ENCODE measurements at regions of chr6 and their contacts with region 1.

Region 1: DNA sequence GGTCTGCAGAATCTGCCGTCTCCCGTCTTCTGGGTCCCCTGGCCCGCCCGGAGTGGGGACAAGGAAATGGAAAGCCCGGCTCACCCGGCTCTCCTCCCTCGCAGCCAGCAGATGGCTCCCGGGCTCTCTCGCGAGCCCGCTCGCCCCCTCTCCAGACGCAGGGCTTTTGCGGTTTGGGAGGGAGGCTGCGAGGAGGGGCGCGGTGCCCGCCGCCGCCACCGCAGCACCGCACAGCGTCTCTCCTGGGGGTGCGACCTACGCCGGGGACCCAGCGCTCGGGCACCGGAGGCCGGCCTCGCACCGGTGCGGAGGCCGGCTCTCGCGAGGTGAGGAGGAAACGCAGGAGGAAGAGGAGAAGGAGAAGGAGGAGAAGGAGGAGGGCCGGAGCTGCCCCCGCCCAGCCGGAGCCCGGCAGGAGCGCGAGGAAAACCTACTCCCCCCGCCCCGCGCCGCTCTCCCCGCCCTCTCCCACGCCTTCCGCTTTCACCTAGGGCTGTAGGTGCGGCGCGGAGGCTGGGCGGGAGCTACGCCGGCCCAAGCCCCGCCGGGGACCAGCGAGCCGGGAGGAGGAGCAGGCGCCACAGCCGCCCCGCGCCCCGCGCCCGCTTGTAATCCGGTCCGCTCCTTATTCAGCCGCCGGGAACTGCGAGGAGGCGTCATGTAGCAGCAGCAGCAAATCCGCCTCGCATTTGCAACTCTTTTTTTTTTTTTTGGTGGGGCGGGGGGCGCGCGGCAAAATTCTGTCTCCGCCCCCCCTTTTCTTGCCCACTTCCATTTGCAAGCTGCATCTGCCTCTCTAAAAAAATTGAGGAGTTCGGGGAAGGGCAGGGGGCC is at the start of gene CARMIL1:
- DNase-seq: peak; percentile 90
- ATAC-seq: peak; percentile 76
- H3K4me3 ChIP-seq: peak within 1 kb of the TSS; percentile 84
- H3K27ac ChIP-seq: peak within 1 kb of the TSS; percentile 67
- H3K4me1 ChIP-seq: peaks cover 34% of the 10 kb centered on the region
- H3K27me3 ChIP-seq: no peaks in the 10 kb centered on the region
- CTCF ChIP-seq: peak; percentile 82
- total RNA-seq, gene CARMIL1: 17.0 and 22.0 TPM in 2 replicates

Region 2: DNA sequence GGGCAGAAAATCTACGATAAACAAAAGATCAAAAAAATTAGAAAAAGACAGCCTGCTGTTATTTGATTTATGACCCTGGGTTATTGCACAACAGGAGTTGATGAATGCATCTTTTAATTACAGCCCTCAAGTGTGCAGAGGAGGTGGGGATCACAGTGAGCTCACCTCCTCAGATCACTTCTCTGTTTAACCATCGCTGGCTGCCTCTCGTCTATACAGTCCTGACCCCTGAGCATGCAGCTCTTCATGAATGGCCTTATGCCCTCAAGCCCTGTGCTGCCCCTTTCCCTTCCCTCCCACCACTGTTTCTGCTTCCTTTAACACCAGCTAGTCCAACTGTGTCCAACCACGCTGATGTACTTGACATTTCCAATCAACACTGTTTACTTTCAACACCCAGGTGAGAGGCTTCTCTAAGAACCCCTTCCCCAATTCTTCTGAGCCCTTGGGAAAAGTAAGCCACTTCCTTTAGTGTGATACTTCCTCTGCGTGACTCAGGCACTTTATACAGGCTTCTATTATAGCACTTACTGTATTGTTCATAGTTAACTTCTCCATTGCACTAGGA is 282.8 kb before region 1 on chr6:
- CTCF ChIA-PET with region 1: no interaction called
- POLR2A ChIA-PET with region 1: no interaction called
- intact Hi-C with region 1: no loop called
- DNase-seq: no peak
- ATAC-seq: no peak
- H3K4me3 ChIP-seq: no peak overlapping the region
- H3K27ac ChIP-seq: no peak overlapping the region
- H3K4me1 ChIP-seq: no peaks in the 10 kb centered on the region; the same call in 1 of the 2 replicates
- H3K27me3 ChIP-seq: no peaks in the 10 kb centered on the region
- CTCF ChIP-seq: no peak

Region 3: GRCh38 chr6:25312703-25313501 is 33.8 kb after region 1 on chr6:
- CTCF ChIA-PET with region 1: interaction called, 10 read pairs
- POLR2A ChIA-PET with region 1: interaction called, 35 read pairs
- intact Hi-C with region 1: loop called (anchors 1 kb)
- DNase-seq: peak; percentile 82
- ATAC-seq: peak; percentile 75
- H3K4me3 ChIP-seq: peak overlapping the region; percentile 61
- H3K27ac ChIP-seq: peak overlapping the region; percentile 85
- H3K4me1 ChIP-seq: peaks cover 38% of the 10 kb centered on the region
- H3K27me3 ChIP-seq: no peaks in the 10 kb centered on the region
- CTCF ChIP-seq: no peak; the same call in 1 of the 2 replicates

Region 4: DNA sequence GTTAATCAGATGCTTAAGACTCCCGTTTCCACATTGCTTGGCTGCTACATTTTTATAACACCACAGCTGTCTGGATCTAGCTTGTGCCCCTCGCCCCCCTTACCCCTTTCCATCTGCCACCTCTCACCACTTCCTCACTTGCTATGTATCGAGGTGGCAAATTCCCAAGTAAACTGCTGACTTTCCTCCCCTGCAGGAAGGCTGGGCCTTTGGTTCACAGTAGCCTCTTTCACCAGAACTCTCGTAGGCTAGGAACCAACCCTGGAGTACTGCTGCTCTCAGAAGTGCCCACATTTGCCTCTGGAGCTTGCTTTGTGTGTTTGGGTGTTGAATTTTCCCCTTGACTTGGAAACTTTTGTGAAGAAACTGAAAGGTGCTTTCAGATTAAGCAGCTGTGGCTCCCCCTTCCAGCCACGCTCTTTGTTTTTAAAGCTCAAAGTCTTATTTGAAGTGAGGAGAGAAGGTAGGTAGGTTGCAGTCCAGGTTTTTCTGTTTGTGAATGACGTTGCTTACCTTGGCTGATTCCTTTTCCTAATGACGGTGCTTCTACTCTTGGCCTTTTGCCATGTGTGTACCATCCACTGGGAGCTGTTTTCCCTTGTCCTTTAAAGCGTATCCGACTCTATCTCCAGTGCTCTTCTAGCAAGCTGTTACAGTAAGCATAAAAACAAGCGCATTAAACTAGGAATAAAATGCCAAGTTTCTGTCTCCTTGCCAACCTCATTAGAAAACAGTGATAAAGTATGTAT is 90.5 kb after region 1 on chr6:
- CTCF ChIA-PET with region 1: interaction called, 3 read pairs
- POLR2A ChIA-PET with region 1: no interaction called
- intact Hi-C with region 1: loop called (anchors 10 kb)
- DNase-seq: no peak
- ATAC-seq: no peak
- H3K4me3 ChIP-seq: no peak overlapping the region
- H3K27ac ChIP-seq: no peak overlapping the region
- H3K4me1 ChIP-seq: peaks cover 11% of the 10 kb centered on the region
- H3K27me3 ChIP-seq: no peaks in the 10 kb centered on the region
- CTCF ChIP-seq: no peak

Region 5: DNA sequence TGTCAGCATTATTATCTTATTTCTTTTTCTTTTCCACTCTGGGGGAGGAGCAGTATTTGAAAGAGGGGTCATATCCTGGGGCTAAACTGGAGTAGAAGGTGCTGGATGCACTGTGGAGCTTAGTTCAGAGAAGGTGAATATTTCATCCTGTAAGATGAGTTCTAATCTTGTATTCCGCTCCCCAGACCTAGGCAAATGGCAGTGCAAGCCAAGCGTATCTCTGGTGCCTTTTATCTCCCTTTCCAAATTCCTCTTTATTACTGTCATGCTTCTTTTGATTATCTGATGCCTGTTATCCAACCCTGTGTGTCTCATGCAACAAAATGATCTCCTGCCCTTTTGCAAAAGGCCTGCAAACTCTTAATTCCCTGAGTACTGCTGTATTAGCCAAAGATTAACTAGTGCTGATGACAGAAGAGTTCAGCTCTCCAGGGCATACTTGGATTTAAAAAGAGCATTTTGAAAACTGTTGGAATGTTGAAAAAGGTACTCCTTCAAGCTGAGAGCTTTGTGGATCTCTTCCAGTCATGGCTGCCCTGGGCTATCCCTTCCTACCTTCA is 138.0 kb after region 1 on chr6:
- CTCF ChIA-PET with region 1: interaction called, 9 read pairs
- POLR2A ChIA-PET with region 1: interaction called, 18 read pairs
- intact Hi-C with region 1: no loop called
- DNase-seq: no peak
- ATAC-seq: no peak
- H3K4me3 ChIP-seq: no peak overlapping the region
- H3K27ac ChIP-seq: no peak overlapping the region
- H3K4me1 ChIP-seq: peaks cover 22% of the 10 kb centered on the region
- H3K27me3 ChIP-seq: no peaks in the 10 kb centered on the region
- CTCF ChIP-seq: no peak

Region 6: GRCh38 chr6:25490018-25490801 is 211.1 kb after region 1 on chr6:
- CTCF ChIA-PET with region 1: interaction called, 35 read pairs
- POLR2A ChIA-PET with region 1: no interaction called
- intact Hi-C with region 1: loop called (anchors 1 kb)
- DNase-seq: peak; percentile 92
- ATAC-seq: peak; percentile 97
- H3K4me3 ChIP-seq: no peak overlapping the region
- H3K27ac ChIP-seq: no peak overlapping the region
- H3K4me1 ChIP-seq: peaks cover 4% of the 10 kb centered on the region; the same call in 1 of the 2 replicates
- H3K27me3 ChIP-seq: no peaks in the 10 kb centered on the region
- CTCF ChIP-seq: peak; percentile 90

Region 7: GRCh38 chr6:25511376-25511775 is 232.2 kb after region 1 on chr6:
- CTCF ChIA-PET with region 1: interaction called, 13 read pairs
- POLR2A ChIA-PET with region 1: no interaction called
- intact Hi-C with region 1: no loop called
- DNase-seq: peak; percentile 54
- ATAC-seq: peak; percentile 48; the same call in 1 of the 2 replicates
- H3K4me3 ChIP-seq: no peak overlapping the region
- H3K27ac ChIP-seq: peak overlapping the region; percentile 35
- H3K4me1 ChIP-seq: peaks cover 23% of the 10 kb centered on the region
- H3K27me3 ChIP-seq: no peaks in the 10 kb centered on the region
- CTCF ChIP-seq: no peak

Region 8: DNA sequence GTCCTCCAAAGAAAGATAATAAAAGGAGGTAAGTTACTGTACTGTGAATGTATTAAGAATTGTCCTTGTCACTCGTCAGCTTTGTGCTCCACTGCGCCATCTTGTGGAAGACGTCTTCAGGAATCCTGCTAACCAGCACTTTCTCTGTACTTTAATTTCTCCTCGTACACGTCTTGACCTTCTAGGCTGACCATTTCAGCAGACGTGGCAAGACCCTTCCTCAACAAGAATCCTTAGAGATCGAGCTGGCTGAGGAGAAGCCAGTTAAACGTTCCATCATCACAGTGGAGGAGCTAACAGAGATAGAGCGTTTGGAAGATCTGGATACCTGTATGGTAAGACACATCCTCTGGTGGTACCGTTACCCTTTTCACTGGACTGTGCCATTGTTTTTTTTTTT is 277.4 kb after region 1 on chr6:
- CTCF ChIA-PET with region 1: interaction called, 4 read pairs
- POLR2A ChIA-PET with region 1: no interaction called
- intact Hi-C with region 1: loop called (anchors 1 kb)
- DNase-seq: peak; percentile 88
- ATAC-seq: peak; percentile 72
- H3K4me3 ChIP-seq: no peak overlapping the region
- H3K27ac ChIP-seq: no peak overlapping the region
- H3K4me1 ChIP-seq: peaks cover 9% of the 10 kb centered on the region
- H3K27me3 ChIP-seq: no peaks in the 10 kb centered on the region
- CTCF ChIP-seq: peak; percentile 93